ENCODE measurements at regions of chr3 and their contacts with region 1.

Region 1: DNA sequence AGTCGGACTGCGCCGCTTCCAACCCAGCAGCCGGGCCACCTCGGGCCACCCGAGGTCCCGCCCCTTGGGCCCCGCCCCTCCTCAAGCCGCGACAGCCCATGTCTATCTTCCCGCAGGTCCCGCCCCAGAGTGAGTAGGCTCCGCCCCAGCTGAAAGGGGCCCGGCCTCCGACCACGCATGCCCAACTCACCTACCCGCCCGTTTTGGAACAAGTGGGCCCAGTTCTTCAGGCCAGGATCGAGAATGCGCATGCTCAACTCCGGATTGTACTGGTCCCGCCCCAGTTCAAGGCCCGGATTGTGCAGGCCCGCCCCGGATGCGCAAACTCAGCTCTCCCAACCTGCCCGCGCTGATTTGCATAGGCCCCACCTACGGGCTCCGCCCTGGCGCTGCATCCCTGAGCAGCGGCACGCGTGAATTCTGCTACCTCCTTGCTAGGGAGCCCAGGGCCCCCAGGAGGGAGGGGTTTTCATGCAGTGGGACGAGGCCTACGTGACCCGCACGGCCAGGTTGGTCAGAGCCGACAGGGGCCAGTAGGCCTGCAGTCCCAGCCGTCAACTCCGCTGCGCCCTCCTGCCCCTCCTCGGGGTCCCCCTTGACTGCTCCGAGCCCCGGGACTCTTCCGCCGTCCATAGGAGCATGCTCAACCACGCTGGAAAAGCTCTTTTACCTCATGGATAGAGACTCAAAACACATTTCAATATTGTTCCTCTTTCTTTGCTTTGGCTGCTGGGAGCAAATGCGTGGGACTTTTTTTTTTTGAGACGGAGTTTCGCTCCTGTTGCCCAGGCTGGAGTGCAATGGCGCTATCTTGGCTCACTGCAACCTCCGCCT is at the start of gene PFKFB4:
- DNase-seq: peak; percentile 98
- ATAC-seq: peak; percentile 89
- H3K4me3 Mint-ChIP-seq: peak within 1 kb of the TSS; percentile 86
- H3K27ac Mint-ChIP-seq: peak within 1 kb of the TSS; percentile 87
- H3K4me1 Mint-ChIP-seq: peaks cover 33% of the 10 kb centered on the region
- H3K27me3 Mint-ChIP-seq: no peaks in the 10 kb centered on the region
- CTCF ChIP-seq: no peak
- total RNA-seq, gene PFKFB4: 2.0 and 3.2 TPM in 2 replicates

Region 2: GRCh38 chr3:46947981-46948791 is 1608.8 kb before region 1 on chr3:
- CTCF ChIA-PET with region 1: no interaction called
- POLR2A ChIA-PET with region 1: no interaction called
- intact Hi-C with region 1: no loop called
- DNase-seq: no peak
- ATAC-seq: no peak
- H3K4me3 Mint-ChIP-seq: peak overlapping the region; percentile 11
- H3K27ac Mint-ChIP-seq: peak overlapping the region; percentile 66
- H3K4me1 Mint-ChIP-seq: peaks cover 90% of the 10 kb centered on the region
- H3K27me3 Mint-ChIP-seq: no peaks in the 10 kb centered on the region
- CTCF ChIP-seq: no peak

Region 3: GRCh38 chr3:48301020-48301796 is 255.8 kb before region 1 on chr3:
- CTCF ChIA-PET with region 1: no interaction called
- POLR2A ChIA-PET with region 1: no interaction called
- intact Hi-C with region 1: loop called (anchors 2 kb)
- DNase-seq: peak; percentile 95
- ATAC-seq: peak; percentile 91
- H3K4me3 Mint-ChIP-seq: peak within 1 kb of the TSS; percentile 97
- H3K27ac Mint-ChIP-seq: peak within 1 kb of the TSS; percentile 98
- H3K4me1 Mint-ChIP-seq: peaks cover 42% of the 10 kb centered on the region
- H3K27me3 Mint-ChIP-seq: no peaks in the 10 kb centered on the region
- CTCF ChIP-seq: no peak

Region 4: GRCh38 chr3:48472915-48473616 is 83.9 kb before region 1 on chr3:
- CTCF ChIA-PET with region 1: no interaction called
- POLR2A ChIA-PET with region 1: interaction called, 15 read pairs
- intact Hi-C with region 1: no loop called
- DNase-seq: peak; percentile 84
- ATAC-seq: peak; percentile 89
- H3K4me3 Mint-ChIP-seq: peak overlapping the region; percentile 89
- H3K27ac Mint-ChIP-seq: peak overlapping the region; percentile 99
- H3K4me1 Mint-ChIP-seq: peaks cover 79% of the 10 kb centered on the region
- H3K27me3 Mint-ChIP-seq: no peaks in the 10 kb centered on the region
- CTCF ChIP-seq: no peak

Region 5: DNA sequence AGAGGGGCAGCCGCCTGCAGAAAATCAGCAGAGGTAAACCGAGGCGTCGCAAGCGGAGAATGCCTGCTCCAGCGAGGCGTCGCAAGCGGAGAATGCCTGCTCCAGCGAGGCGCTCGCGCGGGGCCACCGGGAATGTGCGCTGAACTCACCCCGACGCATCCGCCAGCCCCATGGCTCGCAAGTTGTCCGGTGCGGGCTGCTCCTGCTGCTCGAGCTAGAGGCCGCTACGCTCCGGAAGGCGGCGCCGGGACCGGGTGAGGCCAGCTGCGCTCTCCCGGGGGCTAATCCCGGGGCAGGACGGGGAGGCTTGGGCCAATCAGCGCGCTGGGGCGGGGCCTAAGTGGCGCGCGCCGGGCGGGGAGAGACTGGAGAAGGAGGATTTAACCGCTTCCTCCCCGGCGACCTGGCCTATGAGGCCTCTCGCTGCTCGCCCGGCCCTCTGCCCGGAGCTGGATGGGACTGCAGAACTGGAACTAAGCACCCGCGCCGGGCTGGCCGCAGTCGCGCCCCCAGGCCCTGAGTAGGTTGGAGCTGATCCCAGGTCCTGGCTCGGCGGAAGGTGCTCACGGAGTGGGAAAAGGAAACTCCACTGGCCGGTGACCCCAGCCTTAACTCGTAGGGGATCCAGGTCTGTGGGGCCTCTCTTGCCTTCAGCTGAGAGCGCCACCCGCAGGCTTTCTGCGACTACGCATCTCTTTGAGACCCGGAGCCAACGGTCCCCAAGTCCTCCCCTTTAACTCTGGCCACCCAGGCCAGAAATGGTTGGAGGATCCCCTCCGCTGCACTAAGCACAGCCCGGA is 78.4 kb after region 1 on chr3 and contains the start of gene SLC26A6:
- CTCF ChIA-PET with region 1: interaction called, 6 read pairs
- POLR2A ChIA-PET with region 1: interaction called, 3 read pairs
- intact Hi-C with region 1: loop called (anchors 1 kb)
- DNase-seq: peak; percentile 90
- ATAC-seq: peak; percentile 97
- H3K4me3 Mint-ChIP-seq: peak within 1 kb of the TSS; percentile 89
- H3K27ac Mint-ChIP-seq: peak within 1 kb of the TSS; percentile 50
- H3K4me1 Mint-ChIP-seq: peaks cover 15% of the 10 kb centered on the region
- H3K27me3 Mint-ChIP-seq: no peaks in the 10 kb centered on the region
- CTCF ChIP-seq: no peak
- total RNA-seq, gene SLC26A6: 12.4 and 21.5 TPM in 2 replicates

Region 6: GRCh38 chr3:48716982-48717746 is 160.2 kb after region 1 on chr3 and contains the start of gene IP6K2:
- CTCF ChIA-PET with region 1: no interaction called
- POLR2A ChIA-PET with region 1: no interaction called
- intact Hi-C with region 1: loop called (anchors 1 kb)
- DNase-seq: peak; percentile 98
- ATAC-seq: peak; percentile 99
- H3K4me3 Mint-ChIP-seq: peak within 1 kb of the TSS; percentile 98
- H3K27ac Mint-ChIP-seq: peak within 1 kb of the TSS; percentile 94
- H3K4me1 Mint-ChIP-seq: peaks cover 37% of the 10 kb centered on the region
- H3K27me3 Mint-ChIP-seq: peaks cover 4% of the 10 kb centered on the region
- CTCF ChIP-seq: no peak
- total RNA-seq, gene IP6K2: 83.2 and 94.1 TPM in 2 replicates

Region 7: GRCh38 chr3:49689046-49689907 is 1132.3 kb after region 1 on chr3 and contains the starts of genes MST1 and RNF123:
- CTCF ChIA-PET with region 1: no interaction called
- POLR2A ChIA-PET with region 1: no interaction called
- intact Hi-C with region 1: loop called (anchors 5 kb)
- DNase-seq: peak; percentile 95
- ATAC-seq: peak; percentile 83
- H3K4me3 Mint-ChIP-seq: peak within 1 kb of the TSS; percentile 97
- H3K27ac Mint-ChIP-seq: peak within 1 kb of the TSS; percentile 92
- H3K4me1 Mint-ChIP-seq: peaks cover 38% of the 10 kb centered on the region
- H3K27me3 Mint-ChIP-seq: peaks cover 3% of the 10 kb centered on the region
- CTCF ChIP-seq: no peak
- total RNA-seq, gene MST1: 4.7 and 8.0 TPM in 2 replicates
- total RNA-seq, gene RNF123: 35.1 and 51.4 TPM in 2 replicates

Measured in activated B cell treated with CpG ODN at 0.5 μM for 24 hours (primary cell).